ENCODE measurements at regions of chr6 and their contacts with region 1.

Region 1: DNA sequence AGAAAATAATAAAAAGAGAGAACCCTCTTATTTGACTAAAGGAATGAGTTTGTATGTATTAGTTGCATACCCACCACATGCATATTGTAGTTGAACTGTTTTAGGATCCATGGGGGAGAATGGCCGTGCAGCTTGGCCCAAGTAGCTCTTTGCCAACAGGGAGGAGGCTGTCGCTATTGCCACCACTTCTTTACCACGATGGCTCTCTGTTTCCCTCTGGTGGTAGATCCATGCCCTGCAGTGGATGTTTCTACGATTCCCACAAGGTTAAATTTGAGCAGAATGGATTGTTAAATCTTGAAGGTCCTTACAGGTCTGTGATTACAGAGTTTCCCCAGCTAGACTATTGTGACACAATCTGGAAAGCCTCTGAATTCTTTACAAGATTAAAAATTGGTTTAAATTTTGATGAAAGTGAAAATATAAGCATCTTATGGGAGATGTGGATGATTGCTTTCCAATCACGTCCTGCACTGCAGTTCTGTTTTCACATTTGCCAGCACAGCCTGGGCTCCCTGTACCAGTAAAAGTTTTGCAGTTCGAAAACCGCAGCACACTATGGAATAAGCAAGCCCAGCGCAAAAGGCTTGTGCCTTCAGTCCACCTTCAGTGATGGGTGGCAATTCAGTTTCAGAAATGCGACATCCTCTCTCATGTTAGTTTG is 34.4 kb upstream of the FNDC1 start:
- DNase-seq: peak; percentile 78
- CTCF ChIP-seq: peak; percentile 98

Region 2: DNA sequence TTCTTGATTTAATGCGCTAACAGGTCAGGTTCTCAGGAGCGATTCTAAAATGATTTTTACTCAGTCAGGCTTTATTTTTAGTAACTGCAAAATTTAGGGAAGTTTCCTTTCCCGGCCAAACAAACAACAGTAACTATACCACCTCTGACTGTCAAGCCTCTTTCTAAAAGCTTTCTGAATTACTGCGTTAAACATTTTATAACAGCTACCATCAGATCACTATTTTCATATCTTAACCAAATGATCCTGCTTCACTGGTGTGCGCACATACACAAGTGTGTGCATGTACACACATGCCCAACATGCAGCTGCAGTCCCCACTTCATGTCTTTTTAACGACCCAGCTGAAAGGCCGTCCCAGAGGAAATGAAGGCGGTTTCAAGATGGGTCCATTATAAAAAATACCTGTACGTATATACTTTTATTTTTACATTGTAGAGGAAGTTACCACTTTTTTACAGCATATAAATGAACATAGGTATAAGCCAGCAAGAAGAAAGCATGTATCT is 1836.6 kb before region 1 on chr6:
- CTCF ChIA-PET with region 1: no interaction called
- POLR2A ChIA-PET with region 1: no interaction called
- DNase-seq: no peak
- CTCF ChIP-seq: no peak

Region 3: GRCh38 chr6:158417760-158418098 is 717.1 kb before region 1 on chr6:
- CTCF ChIA-PET with region 1: no interaction called
- POLR2A ChIA-PET with region 1: no interaction called
- DNase-seq: no peak
- CTCF ChIP-seq: no peak

Region 4: DNA sequence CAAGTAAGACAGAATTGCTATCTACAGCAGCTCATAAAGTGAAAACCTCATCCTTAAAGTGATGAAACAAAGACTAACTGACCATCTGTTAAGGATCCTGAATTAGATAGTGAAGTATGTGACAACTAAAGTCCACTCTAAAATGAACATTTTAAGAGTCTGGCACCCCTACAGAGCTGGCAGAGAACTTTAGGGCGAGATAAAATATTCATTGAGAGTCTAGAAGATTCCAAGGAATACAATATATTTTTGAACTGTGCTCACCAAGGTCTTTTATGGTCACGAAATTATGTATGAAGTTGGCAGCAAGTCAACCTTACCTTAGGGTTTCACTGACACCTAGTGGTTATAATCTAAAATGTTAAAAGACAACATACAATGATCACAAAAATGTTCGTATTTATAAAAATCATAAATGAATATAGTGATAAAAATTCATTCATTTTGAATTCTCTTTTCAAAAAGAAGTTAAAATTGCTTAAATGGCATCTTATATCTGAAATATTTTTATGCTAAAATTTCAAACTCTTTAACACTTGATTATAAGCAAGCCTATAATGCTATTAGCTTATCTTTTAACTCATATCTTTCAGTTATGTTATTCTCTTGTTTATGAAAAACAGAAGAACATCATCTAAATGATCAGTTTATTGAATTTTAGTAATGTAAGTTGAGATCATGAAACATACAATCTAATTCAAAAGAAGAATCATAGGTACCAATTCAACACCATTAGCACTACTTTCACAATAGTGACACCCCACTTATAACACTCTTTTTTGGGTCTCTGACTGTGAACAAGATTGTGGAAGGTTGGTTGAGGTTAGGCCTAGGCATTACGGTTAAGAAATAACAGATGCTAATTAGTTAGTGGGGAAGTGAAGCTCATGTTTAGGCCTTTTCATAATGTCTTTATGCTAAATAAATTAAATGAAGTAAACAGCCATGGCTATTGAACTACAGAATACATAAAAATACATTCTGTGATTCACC is 162.3 kb before region 1 on chr6:
- CTCF ChIA-PET with region 1: interaction called, 16 read pairs
- POLR2A ChIA-PET with region 1: no interaction called
- DNase-seq: peak; percentile 47
- CTCF ChIP-seq: peak; percentile 39

Region 5: GRCh38 chr6:159008656-159009288 is 126.1 kb before region 1 on chr6:
- CTCF ChIA-PET with region 1: interaction called, 213 read pairs
- POLR2A ChIA-PET with region 1: no interaction called
- DNase-seq: peak; percentile 61
- CTCF ChIP-seq: peak; percentile 59

Region 6: DNA sequence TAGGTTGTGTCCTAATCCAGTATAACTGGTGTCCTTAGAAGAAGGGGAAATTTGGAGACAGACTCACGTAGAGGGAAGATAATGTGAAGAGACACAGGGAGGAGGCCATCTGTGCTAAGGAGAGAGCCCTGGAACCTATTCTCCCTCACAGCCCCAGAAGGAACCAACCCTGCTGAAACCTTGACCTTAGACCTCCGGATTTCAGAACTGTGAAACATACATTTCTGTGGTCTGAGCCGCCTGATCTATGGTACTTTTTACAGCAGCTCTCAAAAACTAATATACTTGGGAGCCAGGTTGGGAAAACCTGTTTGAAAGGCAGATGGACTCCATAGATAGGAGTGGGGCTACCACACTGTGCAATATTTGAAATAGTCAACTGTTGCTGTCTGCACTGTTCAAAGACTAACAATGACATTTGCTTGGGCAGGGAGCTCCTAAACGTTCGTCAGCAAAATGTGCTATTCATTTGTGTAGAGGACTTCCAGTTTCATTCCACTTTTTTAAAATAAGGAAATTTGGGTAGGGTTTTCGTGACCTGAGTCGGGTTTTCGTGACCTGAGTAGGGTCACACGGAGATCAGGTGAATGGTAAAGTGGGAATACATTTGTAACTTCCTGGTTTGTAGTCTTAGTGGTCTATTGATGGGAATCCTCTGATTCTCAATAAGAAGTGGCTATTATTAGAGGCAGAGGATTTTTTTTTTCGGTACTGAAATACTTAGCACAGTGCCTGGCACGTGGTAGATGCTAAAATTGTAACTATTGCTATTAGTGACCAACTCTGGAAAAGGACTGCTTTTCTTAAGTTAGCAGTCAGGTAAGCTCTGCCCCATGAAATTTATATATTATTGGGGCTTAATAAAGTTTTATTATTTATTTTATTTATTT is 101.4 kb before region 1 on chr6:
- CTCF ChIA-PET with region 1: interaction called, 18 read pairs
- POLR2A ChIA-PET with region 1: no interaction called
- DNase-seq: no peak
- CTCF ChIP-seq: no peak

Region 7: GRCh38 chr6:159062564-159062945 is 72.3 kb before region 1 on chr6:
- CTCF ChIA-PET with region 1: interaction called, 10 read pairs
- POLR2A ChIA-PET with region 1: no interaction called
- DNase-seq: peak; percentile 30
- CTCF ChIP-seq: no peak

Region 8: DNA sequence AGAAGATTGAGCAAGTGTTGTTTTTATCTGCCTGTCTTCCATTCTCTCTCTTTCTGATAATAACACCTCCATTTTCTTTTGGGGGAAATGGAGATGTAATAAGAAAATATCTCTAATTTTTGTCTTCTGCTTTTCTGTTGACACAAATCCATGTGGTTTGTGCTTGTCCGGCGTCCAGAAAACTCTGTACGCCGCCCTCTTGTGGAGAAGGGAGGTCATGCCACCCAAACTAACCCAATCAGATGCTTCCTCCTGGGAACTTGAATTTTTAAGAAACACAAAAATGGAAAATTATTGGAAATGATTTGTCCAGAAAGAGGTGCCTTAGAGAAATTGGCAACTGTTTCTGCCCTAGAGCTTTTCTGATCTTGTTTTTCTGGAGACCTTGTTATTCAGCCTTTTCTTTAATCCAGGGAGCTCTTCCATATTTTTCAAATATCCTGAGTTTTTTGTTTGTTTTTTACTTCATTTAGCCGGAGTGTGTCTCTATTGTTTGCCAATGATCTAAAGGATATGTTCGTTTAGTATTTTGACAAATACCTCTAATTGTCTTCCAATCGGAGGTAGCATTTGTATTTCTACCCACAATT is 16.5 kb after region 1 on chr6:
- CTCF ChIA-PET with region 1: interaction called, 61 read pairs
- POLR2A ChIA-PET with region 1: no interaction called
- DNase-seq: peak; percentile 59
- CTCF ChIP-seq: peak; percentile 68

Measured in GM10248 (cell line).